ENCODE measurements at regions of chr9 and their contacts with region 1.

Region 1: GRCh38 chr9:130235897-130236668 is 29.5 kb upstream of the HMCN2 start:
- DNase-seq: peak; percentile 86
- ATAC-seq: peak; percentile 56
- H3K4me3 Mint-ChIP-seq: no peak overlapping the region
- H3K27ac Mint-ChIP-seq: peak overlapping the region; percentile 67
- H3K4me1 Mint-ChIP-seq: peaks cover 20% of the 10 kb centered on the region
- H3K27me3 Mint-ChIP-seq: no peaks in the 10 kb centered on the region
- CTCF ChIP-seq: peak; percentile 99

Region 2: DNA sequence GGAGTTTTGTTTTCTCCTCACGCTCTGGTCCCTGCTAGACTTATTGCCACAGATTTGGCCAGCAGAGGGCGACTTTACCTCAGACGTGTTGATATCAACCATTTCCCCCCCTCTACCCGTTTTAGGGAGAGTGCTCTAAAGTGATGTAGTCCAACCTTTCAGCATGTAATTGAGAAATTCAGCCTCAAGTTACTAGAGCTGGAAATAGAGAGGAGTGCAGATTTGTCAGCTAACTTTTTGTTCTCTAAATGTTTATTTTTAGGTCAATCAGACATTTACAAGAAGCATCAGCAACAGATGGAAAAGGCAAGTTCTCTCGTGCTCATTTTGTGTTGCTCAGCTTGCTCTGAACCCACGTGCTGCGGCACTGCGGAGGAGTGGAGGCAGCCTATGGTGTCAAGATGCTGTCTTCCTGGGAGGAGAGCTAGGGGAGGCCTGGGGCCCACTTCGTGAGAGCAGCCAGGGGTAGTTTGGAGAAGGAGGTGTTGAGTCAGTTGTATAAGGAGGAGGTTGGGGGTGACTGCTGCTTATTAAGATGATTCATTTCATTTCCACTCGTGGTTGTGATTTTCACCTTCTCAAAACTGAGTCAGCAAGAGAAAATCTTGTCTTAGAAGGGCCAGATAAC is 128.7 kb before region 1 on chr9:
- CTCF ChIA-PET with region 1: interaction called, 20 read pairs
- POLR2A ChIA-PET with region 1: no interaction called
- DNase-seq: peak; percentile 84
- ATAC-seq: peak; percentile 74
- H3K4me3 Mint-ChIP-seq: no peak overlapping the region
- H3K27ac Mint-ChIP-seq: 0 out of 2 replicates have a peak overlapping the region, but pooled peaks have one; percentile 12
- H3K4me1 Mint-ChIP-seq: peaks cover 7% of the 10 kb centered on the region
- H3K27me3 Mint-ChIP-seq: no peaks in the 10 kb centered on the region
- CTCF ChIP-seq: peak; percentile 49; the same call in 1 of the 2 replicates

Region 3: DNA sequence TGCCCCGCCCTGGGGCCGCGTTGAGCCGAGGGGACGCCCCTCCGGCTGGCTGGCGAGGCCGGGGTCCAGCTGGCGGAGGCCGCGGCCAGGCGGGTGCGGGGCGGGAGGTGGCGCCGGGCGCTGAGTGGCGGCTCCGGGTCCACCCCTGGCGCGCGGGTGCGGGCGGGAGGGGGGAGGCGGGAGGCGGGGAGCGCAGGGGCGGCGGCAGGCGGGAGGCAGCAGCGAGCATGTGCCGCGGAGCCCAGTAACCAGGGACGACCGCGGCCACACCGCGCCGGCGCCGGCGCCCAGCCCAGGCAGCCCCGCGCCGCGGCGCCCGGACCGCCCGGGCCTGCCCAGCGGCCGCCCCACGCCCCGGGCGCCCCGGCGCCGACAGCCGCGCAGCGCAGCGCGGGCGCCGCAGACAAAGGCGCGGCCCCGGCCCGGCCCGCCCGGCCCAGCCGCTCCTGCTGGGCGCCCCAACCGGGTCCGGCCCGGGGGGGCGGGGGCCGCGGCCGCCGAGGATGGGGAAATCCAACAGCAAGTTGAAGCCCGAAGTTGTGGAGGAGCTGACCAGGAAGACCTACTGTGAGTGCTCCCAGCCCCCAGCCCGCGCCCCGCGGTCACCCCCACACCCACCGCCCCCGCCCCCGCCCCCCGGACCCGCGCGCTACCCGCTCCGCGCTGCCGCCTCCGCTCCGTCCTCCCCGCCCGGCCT is 63.8 kb before region 1 on chr9 and contains the start of gene NCS1:
- CTCF ChIA-PET with region 1: interaction called, 14 read pairs
- POLR2A ChIA-PET with region 1: no interaction called
- DNase-seq: peak; percentile 60
- ATAC-seq: peak; percentile 46
- H3K4me3 Mint-ChIP-seq: peak within 1 kb of the TSS; percentile 76
- H3K27ac Mint-ChIP-seq: 0 out of 2 replicates have a peak within 1 kb of the TSS, but pooled peaks have one; percentile 19
- H3K4me1 Mint-ChIP-seq: peaks cover 19% of the 10 kb centered on the region
- H3K27me3 Mint-ChIP-seq: peaks cover 9% of the 10 kb centered on the region
- CTCF ChIP-seq: no peak
- total RNA-seq, gene NCS1: 31.8 to 32.6 TPM (median 32.4 TPM) in 3 replicates

Region 4: DNA sequence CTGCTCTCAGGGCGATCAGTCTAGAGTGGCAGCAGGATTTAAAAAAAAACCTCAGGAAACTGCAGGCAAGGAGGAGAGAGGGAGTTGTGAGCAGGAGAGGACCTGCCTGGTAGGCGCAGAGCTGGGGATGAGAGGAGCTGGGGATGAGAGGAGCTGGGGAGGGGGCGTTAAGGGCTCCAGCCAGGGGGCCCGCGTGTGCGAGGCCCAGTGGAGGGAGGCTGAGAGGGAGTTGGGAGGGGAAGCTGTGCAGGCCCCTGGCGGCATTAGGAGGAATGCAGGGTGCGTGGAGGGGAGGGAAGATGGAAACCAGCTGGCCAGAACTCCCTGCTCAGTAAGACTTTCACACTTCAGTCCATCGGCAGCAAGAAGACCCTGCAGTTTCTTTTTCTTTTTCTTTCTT is 15.7 kb before region 1 on chr9:
- CTCF ChIA-PET with region 1: interaction called, 13 read pairs
- POLR2A ChIA-PET with region 1: no interaction called
- DNase-seq: no peak
- ATAC-seq: peak; percentile 68
- H3K4me3 Mint-ChIP-seq: no peak overlapping the region
- H3K27ac Mint-ChIP-seq: peak overlapping the region; percentile 25; the same call in 1 of the 2 replicates
- H3K4me1 Mint-ChIP-seq: peaks cover 2% of the 10 kb centered on the region; the same call in 1 of the 2 replicates
- H3K27me3 Mint-ChIP-seq: no peaks in the 10 kb centered on the region
- CTCF ChIP-seq: no peak

Region 5: GRCh38 chr9:130254752-130255630 is 18.9 kb after region 1 on chr9:
- CTCF ChIA-PET with region 1: interaction called, 10 read pairs
- POLR2A ChIA-PET with region 1: no interaction called
- DNase-seq: no peak
- ATAC-seq: no peak
- H3K4me3 Mint-ChIP-seq: no peak overlapping the region
- H3K27ac Mint-ChIP-seq: no peak overlapping the region
- H3K4me1 Mint-ChIP-seq: peaks cover 7% of the 10 kb centered on the region; the same call in 1 of the 2 replicates
- H3K27me3 Mint-ChIP-seq: no peaks in the 10 kb centered on the region; the same call in 1 of the 2 replicates
- CTCF ChIP-seq: no peak

Region 6: GRCh38 chr9:130366072-130366471 is 130.0 kb after region 1 on chr9:
- CTCF ChIA-PET with region 1: no interaction called
- POLR2A ChIA-PET with region 1: no interaction called
- DNase-seq: no peak
- ATAC-seq: no peak
- H3K4me3 Mint-ChIP-seq: no peak overlapping the region
- H3K27ac Mint-ChIP-seq: no peak overlapping the region
- H3K4me1 Mint-ChIP-seq: peaks cover 6% of the 10 kb centered on the region
- H3K27me3 Mint-ChIP-seq: no peaks in the 10 kb centered on the region
- CTCF ChIP-seq: no peak